Heart right ventricle (tissue), 16 donors: ENCODE measurements at regions of chr4 and their contacts with region 1.

Region 1: DNA sequence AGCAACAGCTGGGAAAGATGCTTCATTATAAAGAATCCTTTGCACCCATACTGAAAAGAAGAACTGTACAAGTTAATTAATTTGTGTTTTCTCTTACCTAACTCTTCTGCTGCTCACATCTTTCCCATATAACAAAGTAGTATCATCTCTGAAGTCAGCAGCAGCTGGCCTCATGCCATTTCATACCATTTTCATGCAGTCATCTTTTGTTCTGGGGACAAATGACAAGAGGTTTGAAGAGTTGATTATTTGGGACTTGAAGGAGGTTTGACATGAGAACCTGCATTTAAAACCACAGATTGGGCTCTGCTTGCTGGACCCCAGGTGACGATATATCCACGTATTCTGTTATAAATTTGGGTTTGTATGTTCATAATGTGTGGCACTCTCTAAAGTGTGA is 430.3 kb downstream of the SPRY1 start:
- DNase-seq: peak in 1 of 2 donors; percentile 72
- ATAC-seq: peak in 7 of 8 donors; percentile 46 to 84 (median 66)
- H3K4me3 ChIP-seq: no peak overlapping the region
- H3K27ac ChIP-seq: peak overlapping the region in 7 of 10 donors; percentile 4 to 77 (median 65)
- H3K4me1 ChIP-seq: peaks cover 5 to 42% (median 36%) of the 10 kb centered on the region in 9 donors
- H3K27me3 ChIP-seq: no peaks in the 10 kb centered on the region
- CTCF ChIP-seq: no peak

Region 2: DNA sequence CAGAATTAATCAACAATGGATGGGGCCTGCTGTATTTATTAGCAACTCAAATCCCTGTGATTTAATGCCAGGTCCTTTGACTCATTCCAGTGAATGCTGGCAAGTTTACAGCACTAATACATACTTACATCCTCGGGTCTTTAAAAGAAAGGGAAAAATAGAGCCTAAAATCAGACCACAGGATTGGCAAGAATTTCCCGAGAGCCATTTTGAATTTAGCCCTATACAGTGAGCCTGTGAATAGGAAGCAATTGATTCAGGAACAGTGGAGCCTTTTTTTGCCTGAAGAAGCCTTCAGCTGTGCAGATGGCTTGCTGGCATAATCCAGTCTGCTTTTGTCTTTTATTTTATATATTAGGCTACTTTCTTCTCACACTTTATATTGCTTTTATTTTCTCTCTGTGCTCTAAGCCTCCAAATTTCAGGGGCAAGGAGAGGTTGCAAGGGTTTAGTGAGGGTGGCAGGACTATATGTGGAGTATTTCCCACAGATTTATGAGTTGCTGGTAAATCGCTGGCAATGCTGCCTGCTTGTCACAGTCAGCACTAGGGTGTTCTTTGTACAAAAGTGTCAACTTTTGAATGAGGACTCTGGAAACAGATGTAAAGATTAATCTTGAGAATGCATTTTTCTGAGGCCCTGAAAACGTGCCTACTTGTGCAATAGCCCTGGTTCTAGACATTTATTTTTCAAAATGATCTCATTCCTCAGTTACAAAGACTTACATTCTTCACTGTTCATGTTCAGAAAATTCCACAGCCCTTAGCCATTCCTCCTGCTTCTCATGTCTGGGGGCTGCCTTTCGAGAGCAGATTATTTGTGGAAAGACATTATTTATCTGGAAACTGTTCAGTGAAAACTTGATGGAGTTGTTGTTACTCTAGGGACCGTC is 126.8 kb before region 1 on chr4:
- intact Hi-C with region 1: loop called in 1 of 10 experiments (anchors 5 kb)
- DNase-seq: peak in 1 of 2 donors; percentile 13
- ATAC-seq: peak in 7 of 8 donors; percentile 66 to 92 (median 83)
- H3K4me3 ChIP-seq: no peak overlapping the region
- H3K27ac ChIP-seq: peak overlapping the region in 9 of 10 donors; percentile 38 to 78 (median 73)
- H3K4me1 ChIP-seq: peaks cover 0 to 12% (median 6%) of the 10 kb centered on the region in 9 donors
- H3K27me3 ChIP-seq: no peaks in the 10 kb centered on the region
- CTCF ChIP-seq: no peak

Region 3: GRCh38 chr4:123785538-123785937 is 41.4 kb before region 1 on chr4:
- intact Hi-C with region 1: loop called in 2 of 10 experiments (anchors 5 kb)
- DNase-seq: peak; percentile 24 to 40
- ATAC-seq: peak; percentile 68 to 92 (median 72)
- H3K4me3 ChIP-seq: no peak overlapping the region
- H3K27ac ChIP-seq: peak overlapping the region in 9 of 10 donors; percentile 28 to 86 (median 72)
- H3K4me1 ChIP-seq: peaks cover 0 to 47% (median 31%) of the 10 kb centered on the region in 9 donors
- H3K27me3 ChIP-seq: no peaks in the 10 kb centered on the region
- CTCF ChIP-seq: no peak